ENCODE measurements at regions of chr13 and their contacts with region 1.

Region 1: GRCh38 chr13:60329221-60329983 is 67.6 kb upstream of the TDRD3 start:
- DNase-seq: peak; percentile 83
- H3K4me3 ChIP-seq: no peak overlapping the region
- H3K4me3 Mint-ChIP-seq: no peak overlapping the region
- H3K27ac Mint-ChIP-seq: peak overlapping the region; percentile 10
- H3K4me1 ChIP-seq: peaks cover 35% of the 10 kb centered on the region
- H3K4me1 Mint-ChIP-seq: peaks cover 18% of the 10 kb centered on the region
- H3K27me3 ChIP-seq: no peaks in the 10 kb centered on the region
- H3K27me3 Mint-ChIP-seq: no peaks in the 10 kb centered on the region
- CTCF ChIP-seq: peak; percentile 70 to 81

Region 2: GRCh38 chr13:59677966-59678814 is 651.2 kb before region 1 on chr13:
- CTCF ChIA-PET with region 1: no interaction called
- POLR2A ChIA-PET with region 1: no interaction called
- intact Hi-C with region 1: loop called (anchors 1 kb)
- DNase-seq: peak in 1 of 2 experiments; percentile 51
- H3K4me3 ChIP-seq: no peak overlapping the region
- H3K4me3 Mint-ChIP-seq: no peak overlapping the region
- H3K27ac Mint-ChIP-seq: no peak overlapping the region
- H3K4me1 ChIP-seq: peaks cover 42% of the 10 kb centered on the region
- H3K4me1 Mint-ChIP-seq: peaks cover 6% of the 10 kb centered on the region
- H3K27me3 ChIP-seq: no peaks in the 10 kb centered on the region
- H3K27me3 Mint-ChIP-seq: no peaks in the 10 kb centered on the region
- CTCF ChIP-seq: peak; percentile 79 to 85

Region 3: DNA sequence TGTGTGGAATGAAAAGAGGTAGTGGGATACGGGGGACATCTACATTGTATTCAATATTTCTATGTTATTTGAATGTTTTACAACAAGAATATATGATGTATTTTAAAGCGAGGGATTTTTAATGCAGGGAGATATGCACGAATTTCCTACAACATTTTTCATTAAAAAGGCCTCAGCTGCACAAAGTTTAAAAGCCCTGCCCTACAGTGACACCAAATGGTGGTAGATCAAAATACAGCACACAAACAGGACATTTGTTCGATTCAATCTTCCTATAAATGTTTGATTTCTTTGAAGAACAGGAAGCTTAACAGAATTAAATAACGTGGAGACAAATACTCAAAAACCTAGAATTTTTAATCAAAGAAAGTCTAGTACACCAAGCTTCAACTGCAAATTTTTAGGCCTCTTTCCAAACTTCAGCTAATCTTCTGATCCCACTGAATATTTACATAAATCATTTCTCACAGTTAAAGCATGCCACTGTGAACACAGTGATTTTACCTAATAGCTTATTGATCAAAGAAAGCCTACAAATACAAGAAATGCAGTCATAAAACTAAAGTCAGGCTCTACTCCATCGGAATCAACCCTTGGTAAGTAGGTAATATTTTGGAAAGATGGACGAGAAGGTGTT is 422.9 kb before region 1 on chr13:
- CTCF ChIA-PET with region 1: no interaction called
- POLR2A ChIA-PET with region 1: no interaction called
- intact Hi-C with region 1: loop called (anchors 2 kb)
- DNase-seq: peak in 1 of 2 experiments; percentile 30
- H3K4me3 ChIP-seq: no peak overlapping the region
- H3K4me3 Mint-ChIP-seq: no peak overlapping the region
- H3K27ac Mint-ChIP-seq: no peak overlapping the region
- H3K4me1 ChIP-seq: peaks cover 11% of the 10 kb centered on the region; the same call in 1 of the 2 replicates
- H3K4me1 Mint-ChIP-seq: peaks cover 7% of the 10 kb centered on the region
- H3K27me3 ChIP-seq: no peaks in the 10 kb centered on the region
- H3K27me3 Mint-ChIP-seq: no peaks in the 10 kb centered on the region
- CTCF ChIP-seq: peak; percentile 66 to 67

Region 4: GRCh38 chr13:60134376-60134775 is 195.0 kb before region 1 on chr13:
- CTCF ChIA-PET with region 1: interaction called, 4 read pairs
- POLR2A ChIA-PET with region 1: no interaction called
- intact Hi-C with region 1: loop called (anchors 10 kb)
- DNase-seq: no peak
- H3K4me3 ChIP-seq: no peak overlapping the region
- H3K4me3 Mint-ChIP-seq: no peak overlapping the region
- H3K27ac Mint-ChIP-seq: no peak overlapping the region
- H3K4me1 ChIP-seq: peaks cover 33% of the 10 kb centered on the region
- H3K4me1 Mint-ChIP-seq: peaks cover 33% of the 10 kb centered on the region
- H3K27me3 ChIP-seq: no peaks in the 10 kb centered on the region
- H3K27me3 Mint-ChIP-seq: no peaks in the 10 kb centered on the region
- CTCF ChIP-seq: no peak

Region 5: DNA sequence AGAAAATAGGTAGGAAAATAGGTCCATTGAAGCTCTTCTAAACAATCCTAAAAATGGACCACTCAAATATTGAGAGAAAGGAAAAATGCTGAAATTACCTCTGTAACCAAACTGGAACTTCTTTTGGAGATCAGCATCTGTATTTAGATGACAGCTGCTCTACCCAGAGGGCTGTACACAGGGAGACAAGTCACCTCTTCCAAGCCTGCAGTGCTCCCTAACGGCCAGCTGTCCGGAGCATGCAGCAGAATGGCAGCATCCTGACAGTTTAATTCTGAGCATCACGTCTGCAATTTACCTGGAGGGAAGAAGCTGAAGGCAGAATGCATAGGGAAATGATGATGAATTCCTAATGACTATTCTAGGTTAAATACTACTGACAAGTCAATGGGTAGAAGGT is 102.9 kb before region 1 on chr13:
- CTCF ChIA-PET with region 1: interaction called, 6 read pairs
- POLR2A ChIA-PET with region 1: no interaction called
- intact Hi-C with region 1: loop called (anchors 1 kb)
- DNase-seq: peak; percentile 69 to 79
- H3K4me3 ChIP-seq: no peak overlapping the region
- H3K4me3 Mint-ChIP-seq: no peak overlapping the region
- H3K27ac Mint-ChIP-seq: no peak overlapping the region
- H3K4me1 ChIP-seq: peaks cover 25% of the 10 kb centered on the region
- H3K4me1 Mint-ChIP-seq: peaks cover 27% of the 10 kb centered on the region
- H3K27me3 ChIP-seq: no peaks in the 10 kb centered on the region
- H3K27me3 Mint-ChIP-seq: no peaks in the 10 kb centered on the region
- CTCF ChIP-seq: peak; percentile 55 to 76

Region 6: DNA sequence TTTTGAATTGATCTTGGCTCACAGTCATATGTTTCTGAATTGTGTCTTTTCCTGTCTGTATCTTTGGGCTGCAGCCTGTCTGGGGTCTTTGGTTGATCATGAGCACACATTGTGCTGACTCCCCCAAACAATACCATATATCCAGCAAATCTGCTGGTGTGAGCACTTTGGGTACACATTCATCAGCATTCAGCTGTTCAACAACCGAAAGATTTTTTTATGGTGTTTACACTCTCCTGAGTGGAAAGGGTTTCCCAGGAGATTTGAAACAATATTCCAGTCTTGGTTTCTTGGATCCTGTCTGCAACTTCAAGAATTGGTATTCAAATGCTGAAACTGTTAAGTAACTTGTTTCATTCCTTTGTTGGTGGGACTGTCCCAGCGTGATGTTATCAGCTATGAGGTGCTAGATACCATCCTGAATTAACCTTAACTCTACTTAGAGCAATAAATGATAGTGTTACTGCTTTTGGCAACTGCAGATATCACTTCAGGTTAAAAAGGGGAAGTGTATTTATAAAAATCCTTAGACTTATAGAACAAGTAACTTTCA is 87.3 kb before region 1 on chr13:
- CTCF ChIA-PET with region 1: no interaction called
- POLR2A ChIA-PET with region 1: no interaction called
- intact Hi-C with region 1: no loop called
- DNase-seq: no peak
- H3K4me3 ChIP-seq: no peak overlapping the region
- H3K4me3 Mint-ChIP-seq: no peak overlapping the region
- H3K27ac Mint-ChIP-seq: no peak overlapping the region
- H3K4me1 ChIP-seq: peaks cover 25% of the 10 kb centered on the region
- H3K4me1 Mint-ChIP-seq: peaks cover 24% of the 10 kb centered on the region
- H3K27me3 ChIP-seq: no peaks in the 10 kb centered on the region
- H3K27me3 Mint-ChIP-seq: no peaks in the 10 kb centered on the region
- CTCF ChIP-seq: no peak

Region 7: DNA sequence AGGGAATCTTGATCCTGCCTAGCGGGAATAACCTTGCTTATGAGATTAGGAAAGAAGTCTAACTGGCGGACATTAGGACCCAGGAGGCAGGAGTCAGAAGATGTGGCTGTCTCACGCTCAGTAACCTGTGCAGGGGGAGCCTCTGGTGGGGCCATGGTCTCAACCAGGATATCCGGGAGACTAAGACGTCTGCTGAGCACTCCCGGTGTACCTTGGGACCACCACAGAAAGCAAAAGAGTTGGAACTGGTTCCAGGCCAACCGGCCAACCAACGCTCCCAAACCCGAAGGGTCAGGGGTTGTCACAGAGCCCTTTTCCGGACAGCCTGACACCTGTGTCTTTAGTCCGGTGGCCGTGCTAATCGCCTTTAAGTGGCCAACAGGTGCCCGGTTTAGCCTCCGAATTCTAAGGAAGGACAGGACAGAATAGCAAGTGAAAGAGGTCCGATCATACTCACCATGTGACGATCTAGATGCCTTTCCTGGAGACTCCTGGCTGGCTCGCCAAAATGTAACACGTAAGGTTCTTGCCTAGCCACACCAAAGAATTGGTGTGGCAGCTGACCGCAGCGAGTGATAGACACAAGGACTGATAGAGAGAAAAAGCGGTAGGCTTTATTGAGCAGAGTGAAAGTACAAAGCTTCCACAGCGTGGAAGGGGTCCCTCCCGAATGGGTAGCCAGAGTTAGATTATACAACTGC is 61.8 kb before region 1 on chr13:
- CTCF ChIA-PET with region 1: no interaction called
- POLR2A ChIA-PET with region 1: no interaction called
- intact Hi-C with region 1: loop called (anchors 1 kb)
- DNase-seq: peak; percentile 78 to 81
- H3K4me3 ChIP-seq: peak overlapping the region; percentile 55
- H3K4me3 Mint-ChIP-seq: no peak overlapping the region
- H3K27ac Mint-ChIP-seq: no peak overlapping the region
- H3K4me1 ChIP-seq: peaks cover 39% of the 10 kb centered on the region
- H3K4me1 Mint-ChIP-seq: peaks cover 9% of the 10 kb centered on the region
- H3K27me3 ChIP-seq: no peaks in the 10 kb centered on the region
- H3K27me3 Mint-ChIP-seq: no peaks in the 10 kb centered on the region
- CTCF ChIP-seq: no peak